Activated CD8-positive, alpha-beta T cell treated with anti-CD3 and anti-CD28 coated beads, Interleukin-2, amount 10 ng/mL, durations not matched to agents 7 days and 5 days (primary cell): ENCODE measurements at regions of chr17 and their contacts with region 1.

Region 1: DNA sequence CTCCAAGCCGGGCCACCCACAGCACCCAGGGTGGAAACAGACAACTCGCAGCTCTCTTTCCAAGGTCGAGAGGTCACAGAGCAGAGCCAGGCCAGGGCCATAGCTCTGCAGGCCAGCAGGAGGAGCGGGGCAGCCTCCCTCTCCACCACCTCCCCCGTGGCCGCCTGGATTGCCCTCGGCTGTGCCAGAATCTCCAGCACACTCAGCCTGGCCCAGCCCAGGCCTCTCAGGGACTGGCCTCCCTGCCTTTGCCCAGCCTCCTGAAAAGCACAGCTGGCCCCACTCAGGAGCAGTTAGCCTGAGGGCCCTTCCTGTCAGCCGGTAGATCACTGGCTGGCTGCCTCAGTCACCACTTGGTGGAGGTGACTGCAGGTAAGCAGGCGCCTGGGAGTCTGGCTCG is 85.8 kb upstream of the SEC14L1 start:
- DNase-seq: no peak
- ATAC-seq: no peak
- H3K4me3 Mint-ChIP-seq: no peak overlapping the region
- H3K27ac Mint-ChIP-seq: no peak overlapping the region
- H3K4me1 Mint-ChIP-seq: no peaks in the 10 kb centered on the region
- H3K27me3 Mint-ChIP-seq: peaks cover 9% of the 10 kb centered on the region

Region 2: GRCh38 chr17:76816590-76817135 is 238.3 kb before region 1 on chr17:
- CTCF ChIA-PET with region 1: interaction called, 12 read pairs
- POLR2A ChIA-PET with region 1: no interaction called
- DNase-seq: peak; percentile 79
- ATAC-seq: peak; percentile 93
- H3K4me3 Mint-ChIP-seq: no peak overlapping the region
- H3K27ac Mint-ChIP-seq: no peak overlapping the region
- H3K4me1 Mint-ChIP-seq: peaks cover 7% of the 10 kb centered on the region
- H3K27me3 Mint-ChIP-seq: peaks cover 5% of the 10 kb centered on the region

Region 3: DNA sequence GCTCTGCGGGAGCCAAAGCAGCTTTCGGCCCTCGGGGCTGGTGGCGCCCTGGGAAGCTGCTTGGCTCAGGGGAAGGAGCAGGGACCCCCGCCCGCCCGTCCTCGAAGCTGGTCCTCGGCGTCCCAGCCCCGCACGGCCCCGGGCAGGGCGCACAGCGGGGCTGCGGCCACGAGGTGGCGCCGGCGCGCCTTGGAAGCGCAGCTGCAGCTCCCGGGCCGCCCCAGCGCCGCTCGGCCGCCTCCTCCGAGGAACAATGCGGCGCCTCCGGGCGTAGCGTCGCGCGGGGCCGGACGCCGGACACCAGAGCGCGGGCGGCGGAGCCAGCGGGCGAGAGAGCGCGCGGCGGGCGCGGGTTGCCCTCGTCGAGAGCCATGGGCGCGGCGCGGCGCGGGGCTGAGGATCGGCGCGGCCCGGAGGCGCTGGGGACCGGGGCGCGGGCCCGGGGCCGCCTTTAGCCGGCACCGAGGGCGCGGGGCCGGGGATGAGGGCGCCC is 186.7 kb before region 1 on chr17 and contains the start of gene MGAT5B:
- CTCF ChIA-PET with region 1: interaction called, 87 read pairs
- POLR2A ChIA-PET with region 1: interaction called, 6 read pairs
- DNase-seq: peak; percentile 77
- ATAC-seq: peak; percentile 97
- H3K4me3 Mint-ChIP-seq: peak within 1 kb of the TSS; percentile 40
- H3K27ac Mint-ChIP-seq: no peak within 1 kb of the TSS
- H3K4me1 Mint-ChIP-seq: peaks cover 15% of the 10 kb centered on the region
- H3K27me3 Mint-ChIP-seq: peaks cover 28% of the 10 kb centered on the region
- total RNA-seq, gene MGAT5B: 0.26 TPM in 1 of 2 experiments, not detected in the other

Region 4: DNA sequence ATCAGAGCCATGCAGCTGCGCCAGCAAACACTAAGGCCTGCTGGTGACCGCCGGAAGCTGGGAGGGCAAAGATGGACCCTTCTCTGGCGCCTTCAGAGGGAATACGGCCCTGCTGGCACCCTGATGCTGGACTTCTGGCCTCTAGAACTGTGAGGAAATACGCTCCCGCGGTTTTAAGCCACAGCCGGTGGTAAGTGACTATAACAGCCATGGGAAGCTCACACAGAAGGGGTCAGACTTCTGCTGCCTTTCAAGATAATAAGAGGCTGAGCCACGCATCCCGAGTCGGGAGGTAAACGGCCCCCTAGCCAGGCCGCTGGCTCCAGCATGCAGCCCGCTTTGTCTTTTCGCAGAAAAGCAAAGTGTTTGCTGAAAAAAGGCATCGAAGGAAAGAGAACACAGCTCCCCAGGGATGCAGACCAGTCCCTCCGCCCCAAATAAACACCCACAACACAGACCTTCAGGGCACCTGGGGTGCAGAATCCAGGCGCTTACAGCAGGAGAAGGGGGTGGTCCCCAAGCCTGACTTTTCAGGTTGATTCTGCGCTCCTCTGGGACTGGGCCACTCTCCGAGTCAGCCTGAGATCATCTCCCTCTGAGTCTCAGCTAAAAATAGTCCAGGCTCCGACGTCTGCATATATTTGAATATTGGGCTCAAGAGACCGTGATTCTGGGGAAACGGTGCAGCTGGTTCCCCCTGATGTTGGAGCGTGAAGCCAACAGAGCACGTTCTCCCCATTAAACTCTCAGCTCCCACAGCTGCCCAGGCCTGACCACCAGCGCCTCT is 97.1 kb before region 1 on chr17:
- CTCF ChIA-PET with region 1: no interaction called
- POLR2A ChIA-PET with region 1: no interaction called
- DNase-seq: no peak
- ATAC-seq: no peak
- H3K4me3 Mint-ChIP-seq: no peak overlapping the region
- H3K27ac Mint-ChIP-seq: no peak overlapping the region
- H3K4me1 Mint-ChIP-seq: no peaks in the 10 kb centered on the region
- H3K27me3 Mint-ChIP-seq: no peaks in the 10 kb centered on the region

Region 5: DNA sequence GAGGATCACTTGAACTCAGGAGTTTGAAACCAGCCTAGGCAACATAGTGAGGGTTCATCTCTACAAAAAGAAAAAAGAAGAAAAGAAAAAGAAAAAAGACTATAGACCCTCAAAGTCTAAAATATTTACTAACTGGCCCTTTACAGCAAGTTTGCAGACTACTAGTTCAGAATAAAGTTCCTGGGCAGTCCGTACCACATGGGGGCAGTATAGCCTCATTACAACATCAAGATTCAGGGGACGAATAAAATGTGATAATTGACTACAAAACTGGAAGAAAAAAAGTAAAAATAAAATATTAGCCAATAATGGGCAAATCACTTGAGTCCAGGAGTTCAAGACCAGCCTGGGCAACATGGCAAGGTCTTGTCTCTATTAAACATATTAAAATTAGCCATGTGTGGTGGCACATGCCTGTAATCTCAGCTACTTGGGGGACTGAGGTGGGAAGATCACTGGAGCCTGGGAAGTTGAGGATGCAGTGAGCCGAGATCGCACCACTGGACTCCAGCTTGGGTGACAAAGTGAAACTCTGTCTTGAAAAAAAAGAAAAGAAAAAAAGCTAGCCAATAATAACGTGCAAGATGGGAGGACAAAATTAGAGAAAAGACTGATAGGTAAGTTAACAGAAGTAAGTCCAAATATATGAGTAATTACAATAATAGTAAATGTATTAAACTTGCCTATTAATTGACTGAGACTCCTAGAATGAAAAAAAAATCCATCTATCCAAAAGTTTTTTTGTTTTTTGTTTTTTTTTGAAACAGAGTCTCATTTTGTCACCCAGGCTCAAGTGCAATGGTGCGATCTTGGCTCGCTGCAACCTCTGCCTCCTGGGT is 43.5 kb before region 1 on chr17:
- CTCF ChIA-PET with region 1: interaction called, 52 read pairs
- POLR2A ChIA-PET with region 1: no interaction called
- DNase-seq: peak; percentile 75
- ATAC-seq: no peak
- H3K4me3 Mint-ChIP-seq: no peak overlapping the region
- H3K27ac Mint-ChIP-seq: no peak overlapping the region
- H3K4me1 Mint-ChIP-seq: no peaks in the 10 kb centered on the region
- H3K27me3 Mint-ChIP-seq: peaks cover 14% of the 10 kb centered on the region

Region 6: DNA sequence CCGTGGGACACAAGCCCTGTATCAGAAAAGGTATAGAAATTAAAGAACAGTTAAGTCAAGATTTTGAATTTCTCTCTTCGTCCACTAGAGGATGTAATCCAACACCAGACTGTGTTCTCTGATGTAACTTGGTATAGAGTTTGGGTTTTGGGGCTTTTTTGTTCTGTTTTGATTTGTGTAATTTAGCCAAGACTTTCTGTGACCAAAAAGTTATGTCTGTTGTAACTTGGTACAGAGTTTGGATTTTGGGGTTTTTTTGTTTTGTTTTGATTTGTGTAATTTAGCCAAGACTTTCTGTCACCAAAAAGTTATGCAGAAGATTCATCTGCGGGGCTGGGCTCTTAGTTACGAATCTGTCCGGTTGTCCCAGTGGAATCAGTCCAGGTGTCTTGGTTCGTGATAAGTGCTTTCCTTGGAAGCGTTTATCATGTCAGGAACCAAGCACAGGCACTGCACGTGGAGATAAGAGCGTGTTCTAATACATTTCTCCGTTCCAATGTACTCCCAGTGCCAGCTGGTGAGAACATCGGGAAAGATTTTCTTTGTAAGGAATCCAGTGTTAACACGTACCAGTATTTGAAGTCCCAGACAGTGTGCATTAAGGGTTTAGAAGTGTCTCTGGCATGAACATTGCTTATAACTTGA is 41.8 kb after region 1 on chr17:
- CTCF ChIA-PET with region 1: no interaction called
- POLR2A ChIA-PET with region 1: no interaction called
- DNase-seq: no peak
- ATAC-seq: peak; percentile 66
- H3K4me3 Mint-ChIP-seq: no peak overlapping the region
- H3K27ac Mint-ChIP-seq: no peak overlapping the region
- H3K4me1 Mint-ChIP-seq: peaks cover 47% of the 10 kb centered on the region
- H3K27me3 Mint-ChIP-seq: no peaks in the 10 kb centered on the region